WTC11 (cell line): ENCODE measurements at regions of chrX and their contacts with region 1.

Region 1: GRCh38 chrX:48957827-48958634 is 624 bp upstream of the OTUD5 start:
- DNase-seq: peak; percentile 93
- ATAC-seq: peak; percentile 95
- H3K4me3 Mint-ChIP-seq: peak overlapping the region; percentile 99
- H3K27ac Mint-ChIP-seq: peak overlapping the region; percentile 100
- H3K4me1 Mint-ChIP-seq: peaks cover 11% of the 10 kb centered on the region; the same call in 1 of the 2 replicates
- H3K27me3 Mint-ChIP-seq: no peaks in the 10 kb centered on the region
- CTCF ChIP-seq: no peak

Region 2: GRCh38 chrX:48972220-48973167 is 14.5 kb after region 1 on chrX:
- CTCF ChIA-PET with region 1: interaction called, 17 read pairs
- POLR2A ChIA-PET with region 1: interaction called, 9 read pairs
- DNase-seq: peak; percentile 65
- ATAC-seq: peak; percentile 74
- H3K4me3 Mint-ChIP-seq: peak overlapping the region; percentile 78
- H3K27ac Mint-ChIP-seq: peak overlapping the region; percentile 45; the same call in 1 of the 2 replicates
- H3K4me1 Mint-ChIP-seq: 0 out of 2 replicates have a peak, but pooled peaks cover 4% of the 10 kb centered on the region
- H3K27me3 Mint-ChIP-seq: no peaks in the 10 kb centered on the region
- CTCF ChIP-seq: no peak